MCF 10A (cell line): ENCODE measurements at regions of chr12 and their contacts with region 1.

Region 1: GRCh38 chr12:122336015-122336946 is 70.0 kb upstream of the VPS33A start:
- DNase-seq: peak; percentile 34
- H3K4me3 Mint-ChIP-seq: no peak overlapping the region
- H3K27ac Mint-ChIP-seq: no peak overlapping the region
- H3K4me1 Mint-ChIP-seq: peaks cover 5% of the 10 kb centered on the region
- H3K27me3 Mint-ChIP-seq: no peaks in the 10 kb centered on the region
- CTCF ChIP-seq: peak; percentile 82

Region 2: GRCh38 chr12:122205063-122205925 is 131.0 kb before region 1 on chr12:
- CTCF ChIA-PET with region 1: no interaction called
- POLR2A ChIA-PET with region 1: no interaction called
- intact Hi-C with region 1: no loop called
- DNase-seq: no peak
- H3K4me3 Mint-ChIP-seq: peak overlapping the region; percentile 59
- H3K27ac Mint-ChIP-seq: no peak overlapping the region
- H3K4me1 Mint-ChIP-seq: peaks cover 6% of the 10 kb centered on the region
- H3K27me3 Mint-ChIP-seq: no peaks in the 10 kb centered on the region
- CTCF ChIP-seq: no peak

Region 3: GRCh38 chr12:122322501-122322900 is 13.8 kb before region 1 on chr12:
- CTCF ChIA-PET with region 1: interaction called, 12 read pairs
- POLR2A ChIA-PET with region 1: interaction called, 4 read pairs
- intact Hi-C with region 1: no loop called
- DNase-seq: peak; percentile 56
- H3K4me3 Mint-ChIP-seq: no peak overlapping the region
- H3K27ac Mint-ChIP-seq: peak overlapping the region; percentile 28
- H3K4me1 Mint-ChIP-seq: peaks cover 13% of the 10 kb centered on the region
- H3K27me3 Mint-ChIP-seq: no peaks in the 10 kb centered on the region
- CTCF ChIP-seq: no peak